HepG2 (cell line): ENCODE measurements at regions of chr5 and their contacts with region 1.

Region 1: GRCh38 chr5:151080623-151081430 is at the start of gene TNIP1:
- DNase-seq: peak; percentile 81
- ATAC-seq: peak; percentile 94
- H3K4me3 ChIP-seq: peak within 1 kb of the TSS; percentile 89 to 96 (median 92)
- H3K27ac ChIP-seq: peak within 1 kb of the TSS; percentile 94
- H3K4me1 ChIP-seq: peaks cover 76% of the 10 kb centered on the region
- H3K27me3 ChIP-seq: no peaks in the 10 kb centered on the region; a peak in 1 of 5 replicates
- CTCF ChIP-seq: peak; percentile 18; the same call in 1 of the 2 replicates
- EP300 ChIP-seq: no peak
- POLR2A ChIP-seq: peak; percentile 38 to 68; a peak in 3 of 4 replicates
- RAD21 ChIP-seq: no peak; the same call in 1 of the 2 replicates
- total RNA-seq, gene TNIP1: 26.2 and 29.8 TPM in 2 replicates

Region 2: DNA sequence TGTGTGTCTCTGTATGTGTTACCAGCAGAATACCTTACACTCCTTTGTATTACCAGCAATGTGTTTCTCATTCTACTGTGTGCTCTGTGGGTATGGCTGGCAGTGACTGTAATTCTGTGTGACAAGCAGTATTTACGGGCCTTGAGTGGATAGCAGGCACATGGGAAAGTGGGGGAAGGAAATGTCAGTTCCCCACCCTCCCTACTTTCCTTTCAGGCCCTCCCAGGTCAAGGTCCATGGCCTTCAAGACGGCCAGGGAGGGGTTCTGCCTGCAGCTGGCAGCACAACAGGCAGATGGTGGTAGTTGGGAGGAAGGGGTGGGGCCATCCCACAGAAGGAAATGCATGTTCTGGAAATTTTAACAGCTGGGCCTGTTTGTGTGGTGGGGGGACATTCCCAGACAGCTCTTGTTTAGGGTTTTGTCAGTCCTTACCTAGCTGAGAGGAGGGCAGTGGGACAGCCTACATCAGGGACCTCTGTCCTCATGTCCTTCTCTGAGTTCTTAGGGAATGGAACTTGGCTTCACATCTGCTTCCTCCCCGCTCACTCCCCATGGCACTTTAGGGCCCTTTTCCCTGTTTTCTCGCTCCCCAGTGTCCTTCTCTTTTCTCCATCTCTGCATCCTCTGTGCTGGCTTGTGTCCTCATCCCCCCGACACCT is 14.6 kb after region 1 on chr5:
- CTCF ChIA-PET with region 1: no interaction called
- POLR2A ChIA-PET with region 1: interaction called, 10 read pairs
- in situ Hi-C with region 1: no loop called
- intact Hi-C with region 1: no loop called
- DNase-seq: no peak
- ATAC-seq: peak; percentile 11
- H3K4me3 ChIP-seq: no peak overlapping the region; a peak in 1 of 6 replicates
- H3K27ac ChIP-seq: no peak overlapping the region
- H3K4me1 ChIP-seq: peaks cover 49% of the 10 kb centered on the region
- H3K27me3 ChIP-seq: no peaks in the 10 kb centered on the region; a peak in 1 of 5 replicates
- CTCF ChIP-seq: no peak
- EP300 ChIP-seq: no peak
- POLR2A ChIP-seq: 0 out of 4 replicates have a peak, but pooled peaks of 1 of the 2 experiments have one; percentile 24
- RAD21 ChIP-seq: no peak

Region 3: GRCh38 chr5:151315998-151316597 is 235.3 kb after region 1 on chr5:
- CTCF ChIA-PET with region 1: no interaction called
- POLR2A ChIA-PET with region 1: no interaction called
- in situ Hi-C with region 1: no loop called
- intact Hi-C with region 1: no loop called
- DNase-seq: peak; percentile 37
- ATAC-seq: peak; percentile 95
- H3K4me3 ChIP-seq: no peak overlapping the region
- H3K27ac ChIP-seq: no peak overlapping the region
- H3K4me1 ChIP-seq: no peaks in the 10 kb centered on the region
- H3K27me3 ChIP-seq: no peaks in the 10 kb centered on the region
- CTCF ChIP-seq: peak; percentile 84
- EP300 ChIP-seq: no peak
- POLR2A ChIP-seq: no peak
- RAD21 ChIP-seq: peak; percentile 50; the same call in 1 of the 2 replicates